Heart left ventricle (tissue), 16 donors: ENCODE measurements at regions of chr17 and their contacts with region 1.

Region 1: DNA sequence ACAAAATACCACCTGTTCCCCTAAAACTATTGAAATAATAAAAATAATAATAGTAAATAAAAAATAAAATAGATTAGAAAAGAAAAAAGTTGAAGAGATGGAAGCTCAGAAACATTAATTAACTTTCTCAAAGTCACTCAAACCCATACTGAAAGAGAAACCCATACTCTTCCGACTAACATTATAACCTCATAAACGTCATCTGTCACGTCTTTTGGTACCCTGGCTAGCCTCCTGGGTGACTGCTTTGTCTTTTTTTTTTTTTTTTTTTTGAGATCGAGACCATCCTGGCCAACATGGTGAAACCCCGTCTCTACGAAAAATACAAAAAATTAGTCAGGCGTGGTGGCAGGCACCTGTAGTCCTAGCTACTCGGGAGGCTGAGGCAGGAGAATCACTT is 7.6 kb downstream of the SLFN12L start:
- DNase-seq: no peak
- ATAC-seq: no peak
- H3K4me3 ChIP-seq: no peak overlapping the region
- H3K27ac ChIP-seq: no peak overlapping the region
- H3K4me1 ChIP-seq: peaks cover 0 to 3% (median 0%) of the 10 kb centered on the region in 12 donors
- H3K27me3 ChIP-seq: no peaks in the 10 kb centered on the region
- CTCF ChIP-seq: no peak
- POLR2A ChIP-seq: no peak

Region 2: DNA sequence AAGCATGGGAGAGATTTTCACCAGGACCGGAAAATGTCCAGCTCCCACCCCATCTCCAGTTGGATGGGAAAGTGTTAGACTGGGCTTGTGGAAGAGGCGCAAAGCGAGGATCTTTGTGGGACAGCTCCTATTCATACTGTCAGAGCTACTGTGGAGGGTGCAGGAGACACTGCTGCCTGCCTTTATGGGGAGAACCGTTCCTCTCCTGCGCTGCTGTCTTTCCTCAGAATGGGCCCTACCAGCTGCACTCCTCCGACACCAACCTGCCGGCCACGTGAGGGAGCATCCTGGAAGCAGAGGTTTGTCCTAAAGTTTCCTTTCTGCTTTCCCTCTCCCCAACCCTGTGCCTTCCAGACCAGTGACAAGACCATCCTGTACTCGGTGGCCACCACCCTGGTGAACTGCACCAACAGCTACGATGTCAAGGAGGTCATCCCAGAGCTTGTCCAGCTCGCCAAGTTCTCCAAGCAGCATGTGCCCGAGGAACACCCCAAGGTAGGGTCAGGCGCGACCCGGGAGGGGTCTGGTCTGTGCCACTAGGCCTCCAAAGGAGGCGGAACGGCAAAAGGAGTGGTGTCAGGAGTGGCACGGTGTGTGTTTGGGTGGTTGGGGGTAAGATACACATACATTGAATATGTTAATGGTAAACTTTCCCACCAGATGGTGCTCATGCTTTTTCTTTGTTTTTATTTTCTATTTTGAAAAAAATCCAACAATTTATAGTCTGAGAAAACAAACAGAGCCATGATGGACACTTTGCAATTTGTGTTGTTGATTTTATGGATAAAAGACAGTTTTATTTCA is 358.7 kb before region 1 on chr17:
- intact Hi-C with region 1: loop called in 9 of 10 experiments (anchors 2 to 5 kb)
- DNase-seq: no peak
- ATAC-seq: peak in 2 of 4 donors; percentile 14 to 23
- H3K4me3 ChIP-seq: no peak overlapping the region
- H3K27ac ChIP-seq: no peak overlapping the region
- H3K4me1 ChIP-seq: peaks cover 0 to 11% (median 0%) of the 10 kb centered on the region in 12 donors
- H3K27me3 ChIP-seq: no peaks in the 10 kb centered on the region
- CTCF ChIP-seq: peak in 9 of 12 donors; percentile 13 to 53 (median 33)
- POLR2A ChIP-seq: no peak